ENCODE measurements at regions of chr7 and their contacts with region 1.

Region 1: GRCh38 chr7:152436111-152436930 is 518 bp upstream of the KMT2C start:
- DNase-seq: peak; percentile 92
- H3K4me3 Mint-ChIP-seq: peak overlapping the region; percentile 78
- H3K27ac Mint-ChIP-seq: peak overlapping the region; percentile 81
- H3K4me1 Mint-ChIP-seq: peaks cover 19% of the 10 kb centered on the region
- H3K27me3 Mint-ChIP-seq: no peaks in the 10 kb centered on the region

Region 2: DNA sequence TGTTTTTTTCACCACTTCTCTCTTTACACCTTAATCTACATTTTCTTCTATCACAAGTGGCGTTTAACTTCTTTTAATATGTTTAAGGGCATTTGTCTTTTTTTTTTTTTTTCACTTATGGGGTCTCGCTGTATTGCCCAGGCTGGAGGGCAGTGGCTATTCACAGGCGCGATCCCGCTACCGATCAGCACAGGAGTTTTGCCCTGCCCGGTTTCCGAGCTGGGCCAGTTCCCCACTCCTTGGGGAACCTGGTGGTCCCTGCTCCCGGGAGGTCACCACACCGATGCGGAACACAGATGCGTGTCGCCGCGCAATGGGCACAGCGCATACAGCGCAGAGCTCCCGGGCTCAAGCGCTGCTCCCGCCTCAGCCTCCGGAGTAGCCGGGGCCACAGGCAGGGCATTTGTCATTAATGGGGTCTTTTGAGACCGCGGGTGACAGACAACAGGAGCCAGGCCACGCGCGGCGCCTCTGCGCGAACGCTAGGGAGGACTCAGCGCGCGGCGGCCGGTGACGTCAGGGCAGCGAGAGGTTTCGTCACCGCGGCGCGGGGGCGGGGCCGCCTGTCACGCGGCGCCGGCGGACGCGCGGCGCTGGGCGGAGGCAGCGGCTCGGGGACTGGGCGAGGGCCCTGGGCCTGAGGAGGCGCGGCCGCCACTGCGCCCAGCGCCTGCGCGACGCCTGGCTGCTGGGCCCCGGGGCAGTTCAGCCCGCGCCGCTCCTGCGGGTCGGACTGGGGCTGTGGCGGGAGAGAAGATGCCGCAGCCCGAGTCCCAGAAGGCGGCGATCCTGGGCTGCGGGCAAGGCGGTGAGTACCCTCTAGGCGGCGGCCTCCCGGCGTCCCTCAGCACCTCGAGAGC is 411.0 kb before region 1 on chr7 and contains the start of gene GALNT11:
- CTCF ChIA-PET with region 1: no interaction called
- POLR2A ChIA-PET with region 1: no interaction called
- intact Hi-C with region 1: loop called (anchors 10 kb)
- DNase-seq: peak; percentile 89
- H3K4me3 Mint-ChIP-seq: peak within 1 kb of the TSS; percentile 80
- H3K27ac Mint-ChIP-seq: peak within 1 kb of the TSS; percentile 65
- H3K4me1 Mint-ChIP-seq: peaks cover 32% of the 10 kb centered on the region
- H3K27me3 Mint-ChIP-seq: no peaks in the 10 kb centered on the region
- total RNA-seq, gene GALNT11: 17.7 to 19.7 TPM

Region 3: DNA sequence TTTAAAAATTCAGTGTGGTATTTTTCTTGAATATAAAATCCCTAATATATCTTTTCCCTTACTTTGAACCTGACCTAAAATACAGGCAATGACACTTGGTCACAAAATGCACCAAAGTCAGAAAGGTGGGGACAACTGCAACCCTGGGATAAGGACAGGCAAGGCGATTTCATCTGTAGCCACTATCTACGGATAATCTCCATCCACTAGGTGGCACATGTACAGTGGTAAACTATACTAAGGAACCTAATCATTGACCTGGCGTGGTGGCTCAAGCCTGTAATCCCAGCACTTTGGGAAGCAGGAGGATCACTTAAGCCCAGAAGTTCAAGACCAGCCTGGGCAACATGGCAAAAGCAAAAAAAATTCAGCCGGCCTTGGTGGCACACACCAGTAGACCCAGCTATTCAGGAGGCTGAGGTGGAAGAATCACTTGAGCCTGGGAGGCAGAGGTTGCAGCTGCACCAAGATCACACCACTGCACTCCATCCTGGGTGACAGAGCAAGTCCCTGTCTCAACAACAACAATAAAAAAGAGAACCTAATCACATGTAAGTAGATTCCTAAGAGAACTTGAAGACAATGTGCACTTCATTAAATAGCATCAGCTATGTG is 99.5 kb before region 1 on chr7:
- CTCF ChIA-PET with region 1: interaction called, 9 read pairs
- POLR2A ChIA-PET with region 1: no interaction called
- intact Hi-C with region 1: loop called (anchors 2 kb)
- DNase-seq: no peak
- H3K4me3 Mint-ChIP-seq: no peak overlapping the region
- H3K27ac Mint-ChIP-seq: peak overlapping the region; percentile 74
- H3K4me1 Mint-ChIP-seq: peaks cover 38% of the 10 kb centered on the region
- H3K27me3 Mint-ChIP-seq: no peaks in the 10 kb centered on the region

Region 4: GRCh38 chr7:152402384-152403250 is 33.7 kb before region 1 on chr7:
- CTCF ChIA-PET with region 1: no interaction called
- POLR2A ChIA-PET with region 1: no interaction called
- intact Hi-C with region 1: no loop called
- DNase-seq: no peak
- H3K4me3 Mint-ChIP-seq: no peak overlapping the region
- H3K27ac Mint-ChIP-seq: no peak overlapping the region
- H3K4me1 Mint-ChIP-seq: peaks cover 30% of the 10 kb centered on the region
- H3K27me3 Mint-ChIP-seq: no peaks in the 10 kb centered on the region

Region 5: GRCh38 chr7:152675759-152676636 is 239.7 kb after region 1 on chr7 and contains the start of gene XRCC2:
- CTCF ChIA-PET with region 1: no interaction called
- POLR2A ChIA-PET with region 1: no interaction called
- intact Hi-C with region 1: loop called (anchors 2 kb)
- DNase-seq: peak; percentile 95
- H3K4me3 Mint-ChIP-seq: peak within 1 kb of the TSS; percentile 90
- H3K27ac Mint-ChIP-seq: peak within 1 kb of the TSS; percentile 84
- H3K4me1 Mint-ChIP-seq: peaks cover 11% of the 10 kb centered on the region
- H3K27me3 Mint-ChIP-seq: no peaks in the 10 kb centered on the region
- total RNA-seq, gene XRCC2: 13.6 to 15.0 TPM